ENCODE measurements at regions of chr12 and their contacts with region 1.

Region 1: DNA sequence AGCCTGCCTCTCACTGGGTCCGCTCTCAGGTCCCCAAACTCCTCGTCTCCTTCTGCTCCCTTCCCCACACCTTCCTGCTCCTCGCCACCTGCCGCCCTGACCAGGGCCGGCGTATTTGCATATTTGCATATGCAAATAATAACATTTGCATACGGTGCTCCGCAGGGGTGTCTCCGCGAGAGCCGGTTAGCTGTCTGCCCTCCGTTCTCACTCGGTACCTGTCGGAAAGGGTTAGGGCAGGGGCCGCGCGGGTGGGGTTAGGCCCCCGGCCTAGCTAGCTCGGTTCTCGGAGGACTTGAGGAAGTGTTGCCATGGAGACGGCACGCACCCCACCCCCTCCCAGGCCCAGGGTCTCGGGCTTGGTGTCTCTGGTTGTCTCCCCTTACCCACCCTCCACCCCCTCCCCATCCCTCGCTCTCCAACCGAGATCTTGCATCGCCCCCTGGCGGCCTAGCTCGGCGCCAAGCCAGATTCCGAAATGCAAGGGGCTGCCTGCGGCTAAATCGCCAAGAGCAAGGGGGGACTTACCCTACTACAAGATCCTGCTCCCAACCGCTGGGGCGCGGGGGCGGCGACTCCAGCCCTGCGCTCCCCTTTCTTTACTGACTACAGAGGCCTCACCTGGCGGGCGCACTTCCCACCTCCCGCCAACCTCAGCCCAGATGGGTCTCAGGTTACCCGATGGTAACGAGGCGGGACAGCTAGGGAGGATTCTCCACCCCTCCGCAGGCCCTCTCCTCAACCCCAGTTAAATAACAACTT is 8.1 kb downstream of the STAC3 start:
- DNase-seq: peak in 2 of 3 donors; percentile 65 to 66
- ATAC-seq: peak; percentile 6 to 27 (median 12)
- H3K4me3 ChIP-seq: peak overlapping the region; percentile 26 to 39 (median 37)
- H3K27ac ChIP-seq: no peak overlapping the region
- H3K4me1 ChIP-seq: peaks cover 0 to 50% (median 16%) of the 10 kb centered on the region in 4 donors
- H3K27me3 ChIP-seq: peaks cover 0 to 7% of the 10 kb centered on the region in 2 donors
- CTCF ChIP-seq: peak; percentile 33 to 51 (median 48)
- POLR2A ChIP-seq: no peak

Region 2: GRCh38 chr12:57208631-57209282 is 34.1 kb before region 1 on chr12:
- intact Hi-C with region 1: loop called in 1 of 2 experiments (anchors 5 kb)
- DNase-seq: no peak
- ATAC-seq: no peak
- H3K4me3 ChIP-seq: no peak overlapping the region
- H3K27ac ChIP-seq: no peak overlapping the region
- H3K4me1 ChIP-seq: no peaks in the 10 kb centered on the region
- H3K27me3 ChIP-seq: no peaks in the 10 kb centered on the region
- CTCF ChIP-seq: no peak
- POLR2A ChIP-seq: no peak

Region 3: GRCh38 chr12:57541001-57541400 is 298.1 kb after region 1 on chr12:
- intact Hi-C with region 1: no loop called
- DNase-seq: no peak
- ATAC-seq: no peak
- H3K4me3 ChIP-seq: no peak overlapping the region
- H3K27ac ChIP-seq: no peak overlapping the region
- H3K4me1 ChIP-seq: peaks cover 0 to 4% (median under 1%) of the 10 kb centered on the region in 4 donors
- H3K27me3 ChIP-seq: no peaks in the 10 kb centered on the region
- CTCF ChIP-seq: no peak
- POLR2A ChIP-seq: no peak

Region 4: GRCh38 chr12:57621497-57622292 is 378.8 kb after region 1 on chr12:
- intact Hi-C with region 1: no loop called
- DNase-seq: peak in 2 of 3 donors; percentile 63 to 71
- ATAC-seq: peak; percentile 77 to 86 (median 82)
- H3K4me3 ChIP-seq: peak overlapping the region; percentile 28 to 43 (median 33)
- H3K27ac ChIP-seq: no peak overlapping the region
- H3K4me1 ChIP-seq: peaks cover 0 to 13% (median 6%) of the 10 kb centered on the region in 4 donors
- H3K27me3 ChIP-seq: peaks cover 0 to 39% of the 10 kb centered on the region in 2 donors
- CTCF ChIP-seq: peak; percentile 83 to 97 (median 88)
- POLR2A ChIP-seq: no peak

Region 5: GRCh38 chr12:57965766-57966165 is 722.9 kb after region 1 on chr12:
- intact Hi-C with region 1: no loop called
- DNase-seq: no peak
- ATAC-seq: no peak
- H3K4me3 ChIP-seq: no peak overlapping the region
- H3K27ac ChIP-seq: no peak overlapping the region
- H3K4me1 ChIP-seq: no peaks in the 10 kb centered on the region
- H3K27me3 ChIP-seq: no peaks in the 10 kb centered on the region
- CTCF ChIP-seq: no peak
- POLR2A ChIP-seq: no peak

Measured in right lobe of liver (tissue), 6 donors.